Activated CD4-positive, alpha-beta T cell treated with anti-CD3 and anti-CD28 coated beads for 36 hours (primary cell): ENCODE measurements at regions of chr4 and their contacts with region 1.

Region 1: GRCh38 chr4:142405021-142405694 is 440.9 kb downstream of the INPP4B start:
- DNase-seq: peak; percentile 78
- ATAC-seq: peak; percentile 50
- H3K4me3 Mint-ChIP-seq: peak overlapping the region; percentile 87
- H3K27ac Mint-ChIP-seq: peak overlapping the region; percentile 99
- H3K4me1 Mint-ChIP-seq: peaks cover 51% of the 10 kb centered on the region
- H3K27me3 Mint-ChIP-seq: no peaks in the 10 kb centered on the region

Region 2: GRCh38 chr4:142126890-142127497 is 278.2 kb before region 1 on chr4:
- CTCF ChIA-PET with region 1: no interaction called
- POLR2A ChIA-PET with region 1: no interaction called
- intact Hi-C with region 1: loop called in 1 of 2 experiments (anchors 5 kb)
- DNase-seq: peak; percentile 75
- ATAC-seq: peak; percentile 74
- H3K4me3 Mint-ChIP-seq: no peak overlapping the region
- H3K27ac Mint-ChIP-seq: no peak overlapping the region
- H3K4me1 Mint-ChIP-seq: peaks cover 32% of the 10 kb centered on the region
- H3K27me3 Mint-ChIP-seq: no peaks in the 10 kb centered on the region

Region 3: GRCh38 chr4:142293536-142293935 is 111.6 kb before region 1 on chr4:
- CTCF ChIA-PET with region 1: interaction called, 3 read pairs
- POLR2A ChIA-PET with region 1: no interaction called
- intact Hi-C with region 1: loop called (anchors 2 kb)
- DNase-seq: no peak
- ATAC-seq: no peak
- H3K4me3 Mint-ChIP-seq: no peak overlapping the region
- H3K27ac Mint-ChIP-seq: peak overlapping the region; percentile 3
- H3K4me1 Mint-ChIP-seq: peaks cover 67% of the 10 kb centered on the region
- H3K27me3 Mint-ChIP-seq: no peaks in the 10 kb centered on the region

Region 4: DNA sequence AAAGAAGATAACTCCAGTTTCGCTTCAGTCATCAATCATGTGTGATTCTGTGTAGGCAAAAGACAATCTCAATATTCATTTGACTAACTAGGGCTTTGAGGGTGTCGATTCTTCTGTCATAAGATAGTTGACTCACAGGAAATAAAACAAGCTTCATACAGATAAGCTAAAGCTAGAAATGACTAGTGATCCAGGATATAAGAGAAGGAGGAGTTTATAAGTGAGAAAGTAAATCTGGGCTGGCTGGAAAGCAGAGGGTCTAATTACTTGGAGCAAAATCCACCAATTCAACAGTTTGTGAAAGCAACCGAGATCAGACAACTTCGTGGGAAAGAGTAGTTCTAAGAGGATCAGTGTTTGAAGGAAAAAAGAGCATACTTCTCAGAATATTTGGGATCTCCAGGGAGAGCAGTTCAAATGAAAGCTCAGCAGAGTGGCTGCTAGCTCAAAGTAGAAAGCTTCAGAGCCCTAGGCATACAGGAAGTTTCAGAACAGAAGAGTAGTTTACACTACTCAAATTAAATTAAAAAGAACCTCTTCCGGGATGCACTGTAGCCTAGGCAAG is 11.6 kb after region 1 on chr4:
- CTCF ChIA-PET with region 1: interaction called, 39 read pairs
- POLR2A ChIA-PET with region 1: interaction called, 79 read pairs
- intact Hi-C with region 1: loop called (anchors 1 kb)
- DNase-seq: no peak
- ATAC-seq: peak; percentile 92
- H3K4me3 Mint-ChIP-seq: peak overlapping the region; percentile 57
- H3K27ac Mint-ChIP-seq: peak overlapping the region; percentile 98
- H3K4me1 Mint-ChIP-seq: peaks cover 81% of the 10 kb centered on the region
- H3K27me3 Mint-ChIP-seq: no peaks in the 10 kb centered on the region

Region 5: DNA sequence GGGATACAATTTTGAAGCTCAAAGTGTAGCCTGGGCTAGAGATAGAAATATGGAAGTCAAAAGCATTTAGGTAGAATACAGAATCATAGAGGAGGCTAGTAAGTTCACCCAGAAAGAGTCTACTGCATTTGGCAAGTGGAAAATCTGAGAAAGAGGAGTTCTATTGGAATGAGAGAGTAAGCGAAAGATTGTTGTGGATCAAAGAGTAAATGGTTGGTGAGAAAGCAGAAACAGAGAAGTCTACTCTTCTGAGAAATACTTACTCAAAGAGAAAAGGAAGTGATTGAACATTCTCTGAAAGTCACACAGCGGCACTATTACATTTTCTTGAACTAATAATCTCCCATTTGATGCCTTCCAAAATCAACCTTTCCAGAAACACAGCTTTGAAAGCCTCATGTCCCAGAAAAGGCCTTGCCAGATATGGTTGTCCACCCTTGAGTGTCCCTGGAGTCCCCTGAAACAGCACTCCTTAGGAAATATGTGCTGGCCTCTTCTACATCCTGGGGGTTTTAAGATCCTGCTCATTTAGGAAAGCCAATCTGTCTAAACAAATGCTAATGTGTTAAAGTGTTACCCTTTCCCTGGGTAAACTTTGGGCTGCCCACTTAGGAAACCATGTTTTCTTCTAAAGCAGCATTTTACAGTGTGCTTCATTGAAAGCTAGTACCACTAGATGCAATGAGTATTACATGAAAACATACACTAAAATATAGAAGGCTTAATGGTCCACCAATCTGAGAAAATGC is 308.3 kb after region 1 on chr4:
- CTCF ChIA-PET with region 1: no interaction called
- POLR2A ChIA-PET with region 1: no interaction called
- intact Hi-C with region 1: loop called (anchors 1 to 2 kb)
- DNase-seq: no peak
- ATAC-seq: peak; percentile 76
- H3K4me3 Mint-ChIP-seq: peak overlapping the region; percentile 12
- H3K27ac Mint-ChIP-seq: peak overlapping the region; percentile 87
- H3K4me1 Mint-ChIP-seq: peaks cover 65% of the 10 kb centered on the region
- H3K27me3 Mint-ChIP-seq: no peaks in the 10 kb centered on the region

Region 6: GRCh38 chr4:142846729-142847596 is 441.8 kb after region 1 on chr4:
- CTCF ChIA-PET with region 1: interaction called, 4 read pairs
- POLR2A ChIA-PET with region 1: interaction called, 4 read pairs
- intact Hi-C with region 1: loop called (anchors 2 kb)
- DNase-seq: peak; percentile 89
- ATAC-seq: peak; percentile 82
- H3K4me3 Mint-ChIP-seq: peak overlapping the region; percentile 91
- H3K27ac Mint-ChIP-seq: peak overlapping the region; percentile 85
- H3K4me1 Mint-ChIP-seq: peaks cover 17% of the 10 kb centered on the region
- H3K27me3 Mint-ChIP-seq: peaks cover 6% of the 10 kb centered on the region